ENCODE measurements at regions of chr4 and their contacts with region 1.

Region 1: DNA sequence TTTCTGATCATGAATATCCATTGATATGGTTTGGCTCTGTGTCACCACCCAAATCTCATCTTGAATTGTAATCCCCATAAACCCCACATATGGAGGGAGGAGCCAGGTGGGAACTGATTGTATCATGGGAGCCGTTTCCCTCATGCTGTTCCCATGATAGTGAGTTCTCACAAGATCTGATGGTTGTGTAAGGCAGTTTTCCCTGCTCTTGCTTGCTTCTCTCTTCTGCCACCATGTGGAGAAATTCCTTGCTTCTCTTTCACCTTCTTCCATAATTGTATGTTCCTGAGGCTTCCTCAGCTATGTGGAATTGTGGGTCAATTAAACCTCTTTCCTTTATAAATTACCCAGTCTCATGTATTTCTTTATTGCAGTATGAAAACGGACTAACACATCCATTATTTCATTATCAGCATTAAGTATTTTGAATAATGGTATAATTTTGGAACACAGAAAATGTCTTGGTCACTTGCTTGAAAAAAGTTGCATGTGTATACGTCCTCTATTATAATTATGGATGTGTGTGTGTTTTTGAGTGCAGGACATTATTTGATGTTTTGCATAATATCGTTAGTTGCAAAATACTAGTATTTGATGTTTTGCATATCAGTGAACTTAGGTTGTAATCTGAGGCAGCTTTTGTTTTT is 334.6 kb downstream of the PCDH10 start:
- DNase-seq: peak; percentile 43
- ATAC-seq: peak; percentile 83
- H3K4me3 ChIP-seq: no peak overlapping the region
- H3K27ac ChIP-seq: no peak overlapping the region
- H3K4me1 ChIP-seq: no peaks in the 10 kb centered on the region
- H3K27me3 ChIP-seq: no peaks in the 10 kb centered on the region
- CTCF ChIP-seq: peak; percentile 59
- EP300 ChIP-seq: no peak
- POLR2A ChIP-seq: no peak
- RAD21 ChIP-seq: no peak

Region 2: GRCh38 chr4:133148690-133149363 is 334.9 kb before region 1 on chr4 and contains the start of gene PCDH10:
- CTCF ChIA-PET with region 1: no interaction called
- POLR2A ChIA-PET with region 1: no interaction called
- in situ Hi-C with region 1: loop called (anchors 10 kb)
- intact Hi-C with region 1: loop called (anchors 1 kb)
- DNase-seq: peak; percentile 1
- ATAC-seq: peak; percentile 67
- H3K4me3 ChIP-seq: no peak within 1 kb of the TSS; a peak in 1 of 6 replicates
- H3K27ac ChIP-seq: no peak within 1 kb of the TSS
- H3K4me1 ChIP-seq: no peaks in the 10 kb centered on the region
- H3K27me3 ChIP-seq: peaks cover 0 to 8% of the 10 kb centered on the region in 2 experiments; a peak in 2 of 5 replicates
- CTCF ChIP-seq: no peak
- EP300 ChIP-seq: no peak
- POLR2A ChIP-seq: no peak
- RAD21 ChIP-seq: no peak
- total RNA-seq, gene PCDH10: not detected in 2 replicates

Region 3: GRCh38 chr4:133154725-133155124 is 329.0 kb before region 1 on chr4:
- CTCF ChIA-PET with region 1: interaction called, 3 read pairs
- POLR2A ChIA-PET with region 1: no interaction called
- in situ Hi-C with region 1: loop called (anchors 10 kb)
- intact Hi-C with region 1: loop called (anchors 2 kb)
- DNase-seq: peak; percentile 4
- ATAC-seq: peak; percentile 63
- H3K4me3 ChIP-seq: no peak overlapping the region
- H3K27ac ChIP-seq: no peak overlapping the region
- H3K4me1 ChIP-seq: no peaks in the 10 kb centered on the region
- H3K27me3 ChIP-seq: no peaks in the 10 kb centered on the region; a peak in 2 of 5 replicates
- CTCF ChIP-seq: peak; percentile 40
- EP300 ChIP-seq: no peak
- POLR2A ChIP-seq: no peak
- RAD21 ChIP-seq: no peak

Region 4: GRCh38 chr4:133320576-133321170 is 163.1 kb before region 1 on chr4:
- CTCF ChIA-PET with region 1: interaction called, 3 read pairs
- POLR2A ChIA-PET with region 1: no interaction called
- in situ Hi-C with region 1: no loop called
- intact Hi-C with region 1: loop called (anchors 1 kb)
- DNase-seq: peak; percentile 26
- ATAC-seq: peak; percentile 80
- H3K4me3 ChIP-seq: no peak overlapping the region
- H3K27ac ChIP-seq: no peak overlapping the region
- H3K4me1 ChIP-seq: no peaks in the 10 kb centered on the region
- H3K27me3 ChIP-seq: no peaks in the 10 kb centered on the region
- CTCF ChIP-seq: peak; percentile 61
- EP300 ChIP-seq: no peak
- POLR2A ChIP-seq: no peak
- RAD21 ChIP-seq: no peak

Measured in HepG2 (cell line).